CD4-positive, alpha-beta T cell (primary cell): ENCODE measurements at regions of chr3 and their contacts with region 1.

Region 1: GRCh38 chr3:101573449-101574387 is at the start of gene PCNP:
- DNase-seq: peak; percentile 97 to 99 (median 99)
- ATAC-seq: peak; percentile 73
- H3K4me3 ChIP-seq: peak within 1 kb of the TSS; percentile 96
- H3K4me3 Mint-ChIP-seq: peak within 1 kb of the TSS; percentile 99
- H3K27ac ChIP-seq: peak within 1 kb of the TSS; percentile 97 to 99
- H3K27ac Mint-ChIP-seq: peak within 1 kb of the TSS; percentile 96
- H3K4me1 ChIP-seq: peaks cover 40% of the 10 kb centered on the region
- H3K4me1 Mint-ChIP-seq: peaks cover 80% of the 10 kb centered on the region
- H3K27me3 ChIP-seq: no peaks in the 10 kb centered on the region
- H3K27me3 Mint-ChIP-seq: no peaks in the 10 kb centered on the region
- CTCF ChIP-seq: peak; percentile 85
- total RNA-seq, gene PCNP: 177 to 181 TPM

Region 2: GRCh38 chr3:100603469-100603868 is 970.2 kb before region 1 on chr3:
- CTCF ChIA-PET with region 1: no interaction called
- POLR2A ChIA-PET with region 1: no interaction called
- intact Hi-C with region 1: no loop called
- DNase-seq: no peak
- ATAC-seq: no peak
- H3K4me3 ChIP-seq: peak overlapping the region; percentile 21
- H3K4me3 Mint-ChIP-seq: peak overlapping the region; percentile 20
- H3K27ac ChIP-seq: no peak overlapping the region
- H3K27ac Mint-ChIP-seq: no peak overlapping the region
- H3K4me1 ChIP-seq: peaks cover 14% of the 10 kb centered on the region
- H3K4me1 Mint-ChIP-seq: peaks cover 38% of the 10 kb centered on the region
- H3K27me3 ChIP-seq: no peaks in the 10 kb centered on the region
- H3K27me3 Mint-ChIP-seq: no peaks in the 10 kb centered on the region
- CTCF ChIP-seq: no peak

Region 3: GRCh38 chr3:101319531-101319930 is 254.2 kb before region 1 on chr3:
- CTCF ChIA-PET with region 1: no interaction called
- POLR2A ChIA-PET with region 1: no interaction called
- intact Hi-C with region 1: no loop called
- DNase-seq: no peak
- ATAC-seq: no peak
- H3K4me3 ChIP-seq: no peak overlapping the region
- H3K4me3 Mint-ChIP-seq: no peak overlapping the region
- H3K27ac ChIP-seq: no peak overlapping the region
- H3K27ac Mint-ChIP-seq: no peak overlapping the region
- H3K4me1 ChIP-seq: no peaks in the 10 kb centered on the region
- H3K4me1 Mint-ChIP-seq: no peaks in the 10 kb centered on the region
- H3K27me3 ChIP-seq: no peaks in the 10 kb centered on the region
- H3K27me3 Mint-ChIP-seq: no peaks in the 10 kb centered on the region
- CTCF ChIP-seq: no peak

Region 4: GRCh38 chr3:101381809-101382208 is 191.9 kb before region 1 on chr3:
- CTCF ChIA-PET with region 1: interaction called, 4 read pairs
- POLR2A ChIA-PET with region 1: interaction called, 9 read pairs
- intact Hi-C with region 1: loop called in 1 of 2 experiments (anchors 5 kb)
- DNase-seq: peak in 3 of 14 experiments; percentile 55 to 64 (median 56)
- ATAC-seq: peak; percentile 59
- H3K4me3 ChIP-seq: no peak overlapping the region
- H3K4me3 Mint-ChIP-seq: no peak overlapping the region
- H3K27ac ChIP-seq: no peak overlapping the region
- H3K27ac Mint-ChIP-seq: peak overlapping the region; percentile 45
- H3K4me1 ChIP-seq: peaks cover 11% of the 10 kb centered on the region
- H3K4me1 Mint-ChIP-seq: peaks cover 75% of the 10 kb centered on the region
- H3K27me3 ChIP-seq: no peaks in the 10 kb centered on the region
- H3K27me3 Mint-ChIP-seq: no peaks in the 10 kb centered on the region
- CTCF ChIP-seq: peak; percentile 34

Region 5: DNA sequence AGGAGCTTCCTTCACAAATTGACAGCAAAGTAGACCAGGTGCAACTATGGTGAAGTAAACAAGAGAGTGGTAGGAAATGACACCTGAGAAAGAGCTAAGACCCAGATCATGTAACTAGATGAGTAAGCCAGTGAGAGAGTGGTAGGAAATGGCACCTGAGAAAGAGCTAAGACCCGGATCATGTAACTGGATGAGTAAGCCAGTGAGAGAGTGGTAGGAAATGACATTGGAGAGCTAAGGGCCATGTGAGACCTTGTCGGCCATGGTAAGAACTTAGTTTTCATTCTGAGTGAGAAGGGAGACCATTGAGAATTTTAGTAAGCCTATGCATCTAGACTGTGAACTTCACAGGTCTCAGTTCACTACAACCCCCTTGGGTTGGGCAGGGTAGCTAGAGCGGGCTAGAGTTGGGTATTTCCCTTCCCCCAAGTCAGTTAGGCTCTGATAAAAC is 55.3 kb before region 1 on chr3:
- CTCF ChIA-PET with region 1: interaction called, 16 read pairs
- POLR2A ChIA-PET with region 1: interaction called, 70 read pairs
- intact Hi-C with region 1: loop called (anchors 1 to 2 kb)
- DNase-seq: peak in 12 of 14 experiments; percentile 15 to 90 (median 36)
- ATAC-seq: peak; percentile 82
- H3K4me3 ChIP-seq: peak overlapping the region; percentile 20
- H3K4me3 Mint-ChIP-seq: peak overlapping the region; percentile 46
- H3K27ac ChIP-seq: peak overlapping the region; percentile 82 to 94
- H3K27ac Mint-ChIP-seq: peak overlapping the region; percentile 97
- H3K4me1 ChIP-seq: peaks cover 50% of the 10 kb centered on the region
- H3K4me1 Mint-ChIP-seq: peaks cover 58% of the 10 kb centered on the region
- H3K27me3 ChIP-seq: no peaks in the 10 kb centered on the region
- H3K27me3 Mint-ChIP-seq: no peaks in the 10 kb centered on the region
- CTCF ChIP-seq: no peak

Region 6: GRCh38 chr3:101561630-101562328 is 11.9 kb before region 1 on chr3 and contains the start of gene TRMT10C:
- CTCF ChIA-PET with region 1: interaction called, 4 read pairs
- POLR2A ChIA-PET with region 1: interaction called, 72 read pairs
- intact Hi-C with region 1: loop called (anchors 1 kb)
- DNase-seq: peak; percentile 87 to 97 (median 91)
- ATAC-seq: peak; percentile 94
- H3K4me3 ChIP-seq: peak within 1 kb of the TSS; percentile 93
- H3K4me3 Mint-ChIP-seq: peak within 1 kb of the TSS; percentile 97
- H3K27ac ChIP-seq: peak within 1 kb of the TSS; percentile 81 to 89
- H3K27ac Mint-ChIP-seq: peak within 1 kb of the TSS; percentile 99
- H3K4me1 ChIP-seq: peaks cover 14% of the 10 kb centered on the region
- H3K4me1 Mint-ChIP-seq: peaks cover 50% of the 10 kb centered on the region
- H3K27me3 ChIP-seq: peaks cover 0 to 2% of the 10 kb centered on the region in 2 experiments
- H3K27me3 Mint-ChIP-seq: peaks cover under 1% of the 10 kb centered on the region
- CTCF ChIP-seq: no peak
- total RNA-seq, gene TRMT10C: 49.4 to 51.2 TPM

Region 7: DNA sequence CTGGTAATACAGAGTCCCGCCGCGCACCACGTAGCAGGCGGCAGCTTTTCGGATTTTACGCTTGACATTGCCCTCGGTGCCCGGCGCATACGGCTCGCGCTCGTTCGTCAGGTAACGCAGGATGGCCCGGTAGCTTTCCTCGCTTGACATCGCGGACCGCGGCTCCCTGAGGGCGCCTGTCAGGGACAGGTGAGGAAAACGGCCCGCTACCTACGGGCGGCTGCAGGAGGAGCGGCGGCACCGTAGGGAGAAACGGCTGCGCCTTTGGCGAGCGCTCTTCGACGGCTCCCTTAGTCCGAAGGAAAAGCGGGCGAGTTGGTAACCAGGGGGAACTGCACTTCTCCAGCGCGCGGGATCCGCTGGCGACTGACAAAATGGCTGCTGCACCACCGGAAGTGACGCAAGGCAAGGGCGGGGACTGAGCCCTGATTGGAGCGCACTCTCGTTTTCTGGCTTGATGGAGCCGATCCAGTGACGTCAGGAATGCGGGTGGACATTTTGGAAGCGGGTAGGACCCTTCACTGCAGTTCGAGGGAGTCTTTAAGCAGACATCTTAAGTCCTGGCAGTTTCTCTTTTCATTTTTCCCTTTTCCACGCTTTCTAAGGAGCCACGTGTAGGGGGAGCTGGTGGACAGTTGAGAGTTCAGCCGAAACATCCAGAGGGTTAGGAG is 103.2 kb after region 1 on chr3 and contains the start of gene ZBTB11:
- CTCF ChIA-PET with region 1: interaction called, 8 read pairs
- POLR2A ChIA-PET with region 1: interaction called, 72 read pairs
- intact Hi-C with region 1: loop called (anchors 1 kb)
- DNase-seq: peak; percentile 99 to 100 (median 100)
- ATAC-seq: peak; percentile 67
- H3K4me3 ChIP-seq: peak within 1 kb of the TSS; percentile 71
- H3K4me3 Mint-ChIP-seq: peak within 1 kb of the TSS; percentile 98
- H3K27ac ChIP-seq: peak within 1 kb of the TSS; percentile 97 to 99
- H3K27ac Mint-ChIP-seq: peak within 1 kb of the TSS; percentile 100
- H3K4me1 ChIP-seq: peaks cover 36% of the 10 kb centered on the region
- H3K4me1 Mint-ChIP-seq: peaks cover 60% of the 10 kb centered on the region
- H3K27me3 ChIP-seq: no peaks in the 10 kb centered on the region
- H3K27me3 Mint-ChIP-seq: peaks cover 3% of the 10 kb centered on the region
- CTCF ChIP-seq: no peak
- total RNA-seq, gene ZBTB11: 73.5 to 76.6 TPM

Region 8: DNA sequence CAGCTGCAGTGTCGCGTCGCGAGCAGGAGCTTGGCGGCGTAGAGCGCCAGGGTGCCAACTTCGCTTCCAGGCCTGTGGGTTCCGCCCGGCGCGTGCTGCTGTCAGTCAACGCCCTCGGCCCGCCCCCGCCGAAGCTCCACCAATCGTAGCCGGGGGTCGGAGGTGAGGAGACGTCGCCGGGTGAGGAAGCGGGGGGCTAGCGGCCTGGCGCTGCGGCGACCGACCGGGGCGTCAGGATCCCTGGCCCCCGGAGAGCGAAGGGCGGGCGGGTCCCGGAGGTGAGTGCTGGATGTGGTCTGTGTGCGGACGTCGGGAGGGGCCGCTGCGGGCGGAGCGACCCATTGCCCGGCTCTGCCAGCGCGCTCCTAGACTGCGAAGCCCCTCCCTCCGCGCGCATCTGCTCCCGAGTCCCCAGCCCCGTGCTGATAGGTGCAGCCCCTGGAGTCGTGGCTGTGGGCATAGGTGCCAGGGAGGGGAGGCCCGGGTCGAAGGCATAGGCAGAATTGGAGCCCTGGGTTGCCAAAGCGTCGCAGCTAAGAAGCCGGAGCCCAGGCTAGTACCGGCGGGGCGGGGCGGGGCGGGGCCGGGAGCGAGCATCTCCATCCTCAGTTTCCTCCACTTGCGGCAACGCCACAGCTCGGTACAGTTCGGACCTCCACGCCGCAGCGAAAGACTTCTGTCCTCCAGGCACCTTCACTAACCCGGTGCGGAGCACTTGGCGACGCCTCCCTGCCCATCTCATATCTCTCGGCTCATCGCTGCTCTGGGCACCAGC is 205.5 kb after region 1 on chr3 and contains the start of gene NXPE3:
- CTCF ChIA-PET with region 1: no interaction called
- POLR2A ChIA-PET with region 1: interaction called, 4 read pairs
- intact Hi-C with region 1: loop called in 1 of 2 experiments (anchors 10 kb)
- DNase-seq: peak; percentile 88 to 96 (median 93)
- ATAC-seq: peak; percentile 91
- H3K4me3 ChIP-seq: peak within 1 kb of the TSS; percentile 89
- H3K4me3 Mint-ChIP-seq: peak within 1 kb of the TSS; percentile 98
- H3K27ac ChIP-seq: peak within 1 kb of the TSS; percentile 87 to 89
- H3K27ac Mint-ChIP-seq: peak within 1 kb of the TSS; percentile 100
- H3K4me1 ChIP-seq: peaks cover 26% of the 10 kb centered on the region
- H3K4me1 Mint-ChIP-seq: peaks cover 62% of the 10 kb centered on the region
- H3K27me3 ChIP-seq: no peaks in the 10 kb centered on the region
- H3K27me3 Mint-ChIP-seq: no peaks in the 10 kb centered on the region
- CTCF ChIP-seq: no peak
- total RNA-seq, gene NXPE3: 37.4 to 37.5 TPM